ENCODE measurements at regions of chr3 and their contacts with region 1.

Region 1: DNA sequence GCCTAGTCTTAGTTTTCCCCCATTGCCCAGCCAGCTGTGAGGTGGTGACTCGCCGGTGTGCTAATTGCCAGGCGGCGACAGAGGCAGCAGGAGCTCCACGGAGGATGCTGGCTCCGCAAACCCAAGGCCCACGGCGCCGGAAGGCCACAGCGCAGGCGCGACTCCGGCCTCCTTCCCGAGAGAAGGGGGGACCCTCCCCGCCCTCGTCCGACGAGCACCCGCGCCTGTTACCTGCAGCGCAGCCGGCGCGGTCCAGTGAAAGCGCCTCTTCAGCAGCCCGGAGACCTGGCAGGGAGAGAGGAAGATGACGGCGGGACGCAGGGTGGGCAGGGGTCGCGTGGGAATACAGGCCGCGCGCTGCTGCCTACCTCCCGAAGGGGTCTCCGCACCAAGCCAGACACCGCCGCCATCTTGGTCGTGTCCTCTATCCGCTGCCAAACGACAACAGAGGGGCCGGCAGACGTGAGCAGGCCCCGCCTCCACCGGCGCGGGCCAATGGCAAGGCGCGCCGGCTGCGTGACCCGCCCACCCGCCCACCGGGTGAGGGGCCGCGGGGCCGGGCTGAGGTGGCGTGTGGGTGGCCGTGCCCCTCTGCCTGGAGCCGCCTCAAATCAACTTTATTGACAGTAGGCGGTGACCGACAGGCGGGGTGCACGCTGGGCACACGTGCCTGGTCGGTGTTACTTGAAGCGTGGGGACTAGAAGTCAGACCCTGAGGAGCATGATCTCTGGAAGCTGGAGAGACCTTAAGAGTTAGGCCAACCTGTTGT is at the start of gene PDHB:
- DNase-seq: peak; percentile 89
- H3K4me3 Mint-ChIP-seq: peak within 1 kb of the TSS; percentile 91
- H3K27ac Mint-ChIP-seq: peak within 1 kb of the TSS; percentile 92
- H3K4me1 Mint-ChIP-seq: peaks cover 20% of the 10 kb centered on the region
- H3K27me3 Mint-ChIP-seq: no peaks in the 10 kb centered on the region
- total RNA-seq, gene PDHB: 51.6 to 53.7 TPM

Region 2: DNA sequence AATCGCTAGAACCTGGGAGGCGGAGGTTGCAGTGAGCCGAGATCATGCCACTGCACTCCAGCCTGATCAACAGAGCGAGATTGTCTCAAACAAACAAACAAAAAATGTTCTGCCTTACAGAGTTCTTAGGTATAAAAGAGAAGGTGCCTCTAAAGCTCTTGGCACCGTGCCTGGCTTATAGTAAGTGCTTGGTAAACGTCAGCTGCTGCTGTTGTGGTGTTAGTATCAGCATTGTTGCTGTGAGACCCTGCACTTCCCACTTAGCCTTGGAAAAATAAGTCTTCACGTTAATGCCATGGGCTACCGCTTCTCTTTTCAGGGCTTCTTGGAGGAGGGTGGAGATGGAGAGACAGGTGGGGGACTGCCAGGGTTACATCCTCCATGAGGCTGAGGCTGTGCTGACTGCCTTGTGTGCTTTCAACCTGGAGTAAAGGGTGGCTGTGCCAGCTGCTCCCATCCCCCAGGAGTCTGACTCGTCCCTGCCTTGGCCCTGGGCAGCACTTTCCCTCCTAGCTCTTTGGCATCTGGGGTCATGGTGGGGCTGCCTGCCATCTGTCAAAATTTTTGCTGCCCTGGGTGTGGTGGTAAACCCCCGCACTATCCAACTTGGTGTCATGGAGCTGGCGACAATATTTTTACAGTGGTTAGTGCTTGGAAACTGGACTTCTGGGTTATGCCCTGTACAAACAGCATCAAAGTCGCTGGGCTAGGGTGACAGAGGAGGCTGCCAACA is 407.6 kb before region 1 on chr3:
- CTCF ChIA-PET with region 1: no interaction called
- intact Hi-C with region 1: loop called (anchors 10 kb)
- DNase-seq: peak; percentile 25
- H3K4me3 Mint-ChIP-seq: no peak overlapping the region
- H3K27ac Mint-ChIP-seq: no peak overlapping the region
- H3K4me1 Mint-ChIP-seq: peaks cover 77% of the 10 kb centered on the region
- H3K27me3 Mint-ChIP-seq: no peaks in the 10 kb centered on the region

Region 3: GRCh38 chr3:58237238-58237940 is 196.2 kb before region 1 on chr3 and contains the start of gene ABHD6:
- CTCF ChIA-PET with region 1: no interaction called
- intact Hi-C with region 1: loop called (anchors 5 kb)
- DNase-seq: peak; percentile 75
- H3K4me3 Mint-ChIP-seq: peak within 1 kb of the TSS; percentile 86
- H3K27ac Mint-ChIP-seq: peak within 1 kb of the TSS; percentile 46
- H3K4me1 Mint-ChIP-seq: peaks cover 10% of the 10 kb centered on the region
- H3K27me3 Mint-ChIP-seq: peaks cover 6% of the 10 kb centered on the region
- total RNA-seq, gene ABHD6: 1.1 to 1.6 TPM

Region 4: DNA sequence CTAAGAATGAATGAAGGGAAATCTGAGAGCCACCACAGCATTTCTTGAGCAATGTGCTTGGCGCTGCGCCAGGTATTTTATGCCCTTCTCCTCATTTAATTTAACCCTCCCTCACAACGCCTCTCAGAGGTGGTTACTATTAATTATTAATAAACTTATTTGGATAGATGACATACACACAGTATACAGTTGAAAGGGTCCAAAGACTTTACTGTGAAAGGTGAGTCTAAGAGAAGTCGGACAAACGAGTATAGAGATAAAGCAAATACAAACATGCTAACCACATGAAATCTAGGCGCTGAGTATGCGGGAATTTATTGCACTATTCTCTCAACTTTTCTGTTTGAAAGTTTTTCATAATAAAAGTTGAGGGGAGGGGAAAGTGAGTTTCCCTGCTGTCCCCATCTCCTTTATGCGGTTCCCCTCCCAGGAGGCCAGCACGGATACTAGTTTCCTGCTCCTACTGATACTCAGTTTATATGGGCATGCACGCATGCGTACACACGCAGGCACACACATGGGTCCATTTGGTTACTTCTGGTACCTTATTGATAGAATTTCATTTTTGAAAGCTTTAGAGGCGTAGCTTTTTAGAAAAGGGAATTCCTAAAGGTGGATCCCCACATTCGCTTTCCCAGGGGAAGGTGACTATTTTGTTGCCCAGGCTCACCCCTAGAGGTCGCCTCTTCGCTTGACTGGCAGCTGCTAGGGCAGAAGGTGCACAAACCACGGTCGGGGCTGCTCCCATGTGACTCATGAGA is 29.8 kb after region 1 on chr3:
- CTCF ChIA-PET with region 1: interaction called, 4 read pairs
- intact Hi-C with region 1: loop called (anchors 1 kb)
- DNase-seq: peak; percentile 92
- H3K4me3 Mint-ChIP-seq: peak overlapping the region; percentile 16
- H3K27ac Mint-ChIP-seq: peak overlapping the region; percentile 61
- H3K4me1 Mint-ChIP-seq: peaks cover 15% of the 10 kb centered on the region
- H3K27me3 Mint-ChIP-seq: peaks cover 3% of the 10 kb centered on the region

Measured in activated naive CD4-positive, alpha-beta T cell treated with anti-CD3 and anti-CD28 coated beads for 36 hours (primary cell).